ENCODE measurements at regions of chr18 and their contacts with region 1.

Region 1: DNA sequence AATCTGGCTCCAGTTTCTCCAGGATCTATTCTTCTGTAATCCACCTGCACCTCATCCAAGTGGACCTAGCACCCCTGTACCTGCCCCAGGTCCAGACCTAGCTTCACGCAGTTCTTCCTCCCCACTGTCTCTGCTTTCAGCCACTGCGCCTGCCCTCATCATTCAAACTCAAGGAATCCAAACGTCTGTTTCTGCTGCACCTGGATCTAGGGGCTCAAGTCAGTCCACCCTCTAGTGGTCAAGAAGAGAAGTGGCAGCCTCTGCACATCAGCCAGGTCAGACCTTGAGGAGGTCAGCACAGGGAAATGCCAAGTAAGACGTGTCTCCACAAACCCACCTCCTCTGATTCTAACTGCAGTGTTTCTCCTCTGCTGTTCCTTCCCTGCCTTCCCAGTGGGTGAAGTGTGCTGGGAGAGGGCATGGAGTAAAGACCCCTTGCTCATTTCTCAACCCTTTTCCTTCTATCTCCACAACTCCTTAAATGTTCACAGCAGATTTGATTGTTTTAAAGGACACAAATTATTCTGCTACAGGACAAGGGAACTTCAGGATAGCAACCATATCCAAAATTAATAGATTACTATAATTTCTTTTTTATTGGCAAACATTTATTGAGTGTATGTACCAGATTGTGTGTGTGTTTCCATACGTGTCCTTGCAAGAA is 8.6 kb upstream of the RNF152 start:
- DNase-seq: peak; percentile 46 to 53
- H3K4me3 ChIP-seq: no peak overlapping the region
- H3K27ac ChIP-seq: no peak overlapping the region
- H3K4me1 ChIP-seq: no peaks in the 10 kb centered on the region
- H3K27me3 ChIP-seq: no peaks in the 10 kb centered on the region
- CTCF ChIP-seq: peak; percentile 79 to 94 (median 85)
- POLR2A ChIP-seq: no peak

Region 2: DNA sequence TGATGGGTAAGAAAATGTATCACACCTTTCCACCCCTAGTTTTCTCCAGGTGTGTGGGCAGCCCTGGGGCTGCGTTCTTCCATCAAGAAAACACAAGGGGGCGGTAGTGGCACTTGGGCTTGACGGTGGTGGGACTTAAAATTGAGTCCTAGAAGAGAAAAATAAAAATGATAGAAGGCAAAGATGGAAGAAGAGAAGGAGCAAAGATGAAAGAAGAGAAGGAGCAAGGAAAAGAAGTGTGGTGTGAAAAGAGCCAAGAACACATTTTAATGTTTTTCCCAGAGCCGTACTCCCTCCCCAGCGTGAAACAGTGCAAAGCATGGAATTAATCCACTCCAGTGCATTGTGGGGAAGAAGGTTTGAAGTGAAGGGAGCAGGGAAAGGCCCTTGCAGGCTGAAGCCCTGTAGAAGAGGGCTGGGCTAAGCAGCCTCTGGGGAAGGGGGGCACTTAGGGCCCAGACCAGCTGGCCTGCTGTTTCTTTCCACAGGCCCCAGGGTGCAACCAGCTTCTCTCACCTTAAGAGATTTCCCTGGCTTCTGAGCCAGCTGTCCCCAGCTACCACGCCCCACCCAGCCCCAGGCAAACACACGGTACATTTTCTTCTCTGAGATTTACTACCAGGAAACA is 265.4 kb before region 1 on chr18:
- intact Hi-C with region 1: loop called (anchors 2 kb)
- DNase-seq: peak; percentile 66 to 68
- H3K4me3 ChIP-seq: no peak overlapping the region
- H3K27ac ChIP-seq: peak overlapping the region; percentile 3 to 69 (median 68)
- H3K4me1 ChIP-seq: peaks cover 31 to 32% of the 10 kb centered on the region in 2 donors
- H3K27me3 ChIP-seq: no peaks in the 10 kb centered on the region
- CTCF ChIP-seq: peak; percentile 59 to 95 (median 73)
- POLR2A ChIP-seq: no peak

Region 3: GRCh38 chr18:61842146-61842545 is 59.3 kb before region 1 on chr18:
- intact Hi-C with region 1: no loop called
- DNase-seq: no peak
- H3K4me3 ChIP-seq: no peak overlapping the region
- H3K27ac ChIP-seq: peak overlapping the region in 1 of 3 donors; percentile 7
- H3K4me1 ChIP-seq: no peaks in the 10 kb centered on the region
- H3K27me3 ChIP-seq: no peaks in the 10 kb centered on the region
- CTCF ChIP-seq: no peak
- POLR2A ChIP-seq: no peak

Region 4: GRCh38 chr18:62080172-62080905 is 178.9 kb after region 1 on chr18:
- intact Hi-C with region 1: no loop called
- DNase-seq: no peak
- H3K4me3 ChIP-seq: no peak overlapping the region
- H3K27ac ChIP-seq: no peak overlapping the region
- H3K4me1 ChIP-seq: peaks cover 0 to 6% of the 10 kb centered on the region in 2 donors
- H3K27me3 ChIP-seq: no peaks in the 10 kb centered on the region
- CTCF ChIP-seq: no peak
- POLR2A ChIP-seq: no peak